ENCODE measurements at regions of chr6 and their contacts with region 1.

Region 1: DNA sequence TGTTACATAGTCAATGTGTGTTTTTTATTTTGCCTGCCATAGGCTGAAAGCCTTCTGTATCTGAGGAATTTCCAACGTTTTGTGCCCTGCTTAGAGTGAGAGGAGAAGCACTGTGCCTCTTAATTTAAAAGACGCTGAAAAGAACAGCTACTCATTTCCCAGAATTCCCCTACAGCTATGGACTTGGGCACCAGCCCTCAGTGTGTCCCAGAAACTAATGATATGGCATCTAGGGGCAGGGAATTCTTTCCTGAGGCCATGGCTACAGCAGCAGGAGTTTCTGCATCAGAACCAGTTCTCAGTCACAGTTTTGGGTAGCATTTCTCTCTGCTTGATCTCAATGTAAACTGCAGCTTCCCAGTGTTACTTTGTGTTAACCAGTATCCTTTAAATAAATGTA is 20.2 kb downstream of the OPN5 start:
- DNase-seq: no peak
- H3K4me3 ChIP-seq: no peak overlapping the region
- H3K27ac ChIP-seq: no peak overlapping the region
- H3K4me1 ChIP-seq: no peaks in the 10 kb centered on the region
- H3K27me3 ChIP-seq: peaks cover 0 to 5% (median 0%) of the 10 kb centered on the region in 5 experiments

Region 2: DNA sequence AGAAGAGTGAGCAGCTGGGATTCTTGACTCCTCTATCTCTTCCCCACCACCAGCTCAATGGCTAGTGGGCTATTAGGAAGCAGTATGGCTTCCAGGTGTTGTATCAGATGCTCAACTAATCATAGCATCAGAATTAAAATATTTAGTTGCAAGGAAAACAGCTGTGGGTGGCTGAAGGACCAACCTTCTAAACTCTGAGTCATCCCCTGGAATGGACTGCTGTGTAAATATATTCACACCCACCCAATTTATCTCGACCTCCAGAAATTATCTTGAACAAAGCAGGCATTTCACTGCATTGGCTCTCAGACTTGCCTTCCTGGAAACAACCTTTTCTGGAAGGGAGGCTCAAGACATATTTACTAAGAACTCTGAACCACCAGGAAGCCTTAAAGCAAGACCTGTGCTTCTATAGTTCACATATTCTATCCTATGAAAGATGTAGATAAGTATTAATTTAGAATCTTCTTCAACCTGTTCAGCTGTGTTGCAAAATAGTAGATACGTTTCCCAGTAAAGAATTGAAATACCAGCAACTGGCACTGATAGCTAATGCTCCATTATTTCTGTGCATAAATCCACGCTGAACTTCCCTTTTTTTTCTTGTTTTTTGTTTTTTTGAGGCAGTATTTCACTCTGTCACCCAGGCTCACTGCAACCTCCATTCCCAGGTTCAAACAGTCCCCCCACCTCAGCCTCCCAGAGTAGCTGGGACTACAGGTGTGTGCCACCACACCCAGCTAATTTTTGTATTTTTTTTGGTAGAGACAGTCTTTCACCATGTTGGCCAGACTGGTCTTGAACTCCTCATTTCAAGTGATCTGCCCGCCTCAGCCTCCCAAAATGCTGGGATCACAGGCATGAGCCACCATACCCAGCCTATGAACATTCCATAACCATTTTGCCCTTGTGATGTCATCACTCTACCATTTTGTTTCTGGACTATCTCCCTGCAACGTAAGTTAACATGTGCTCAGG is 381.3 kb before region 1 on chr6:
- CTCF ChIA-PET with region 1: no interaction called
- POLR2A ChIA-PET with region 1: no interaction called
- DNase-seq: peak in 2 of 3 donors; percentile 44 to 64
- H3K4me3 ChIP-seq: no peak overlapping the region
- H3K27ac ChIP-seq: peak overlapping the region in 1 of 2 experiments; percentile 4
- H3K4me1 ChIP-seq: peaks cover 0 to 5% (median 0%) of the 10 kb centered on the region in 4 experiments
- H3K27me3 ChIP-seq: no peaks in the 10 kb centered on the region

Region 3: DNA sequence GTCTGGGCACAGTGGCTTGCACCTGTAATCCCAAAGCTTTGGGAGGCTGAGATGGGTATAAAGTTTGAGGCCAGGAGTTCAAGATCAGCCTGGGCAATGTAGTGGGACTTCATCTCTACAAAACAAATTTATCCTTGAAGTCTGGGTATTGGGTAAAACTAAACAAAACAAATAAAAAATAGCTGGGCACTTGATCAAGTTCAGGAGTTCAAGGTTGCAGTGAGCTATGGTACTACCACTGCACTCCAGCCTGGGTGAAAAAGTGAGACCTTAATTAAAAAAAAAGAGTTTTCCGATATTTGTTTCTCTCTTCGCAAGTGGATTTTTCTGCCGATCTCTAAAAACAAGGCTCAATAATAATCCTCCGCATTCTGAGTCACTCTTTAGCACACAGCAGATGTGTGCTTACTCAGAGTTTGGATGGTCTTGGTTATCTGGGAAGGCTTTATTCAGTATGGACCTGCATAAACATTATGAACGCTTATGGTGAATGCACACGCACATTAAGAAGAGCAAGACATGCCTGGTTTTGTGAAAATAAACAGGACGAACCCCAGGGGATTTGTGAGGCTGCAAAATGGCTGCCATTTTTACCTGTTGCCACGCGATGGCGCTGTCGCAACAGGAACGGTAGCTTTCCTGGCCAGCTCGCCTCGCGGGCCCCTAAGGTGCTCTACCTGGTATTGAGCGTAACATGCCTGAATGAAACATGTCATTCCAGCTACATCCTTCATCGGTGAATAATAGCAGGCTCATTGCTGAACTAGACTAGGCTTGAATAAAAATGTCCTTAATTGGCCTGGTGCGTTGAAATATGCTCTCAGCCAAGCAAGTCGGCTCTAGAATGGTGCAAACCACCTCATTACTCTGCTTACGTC is 14.1 kb before region 1 on chr6:
- CTCF ChIA-PET with region 1: interaction called, 12 read pairs
- POLR2A ChIA-PET with region 1: no interaction called
- DNase-seq: peak; percentile 52 to 66 (median 64)
- H3K4me3 ChIP-seq: peak overlapping the region in 4 of 7 experiments; percentile 8 to 66 (median 28)
- H3K27ac ChIP-seq: no peak overlapping the region
- H3K4me1 ChIP-seq: peaks cover 0 to 4% (median 2%) of the 10 kb centered on the region in 4 experiments
- H3K27me3 ChIP-seq: peaks cover 0 to 14% (median 0%) of the 10 kb centered on the region in 5 experiments